Heart right ventricle (tissue), 16 donors: ENCODE measurements at regions of chr2 and their contacts with region 1.

Region 1: GRCh38 chr2:67329513-67329912 is 67.6 kb upstream of the ETAA1 start:
- DNase-seq: no peak
- ATAC-seq: no peak
- H3K4me3 ChIP-seq: no peak overlapping the region
- H3K27ac ChIP-seq: no peak overlapping the region
- H3K4me1 ChIP-seq: no peaks in the 10 kb centered on the region
- H3K27me3 ChIP-seq: peaks cover 0 to 25% (median 4%) of the 10 kb centered on the region in 7 donors
- CTCF ChIP-seq: no peak

Region 2: DNA sequence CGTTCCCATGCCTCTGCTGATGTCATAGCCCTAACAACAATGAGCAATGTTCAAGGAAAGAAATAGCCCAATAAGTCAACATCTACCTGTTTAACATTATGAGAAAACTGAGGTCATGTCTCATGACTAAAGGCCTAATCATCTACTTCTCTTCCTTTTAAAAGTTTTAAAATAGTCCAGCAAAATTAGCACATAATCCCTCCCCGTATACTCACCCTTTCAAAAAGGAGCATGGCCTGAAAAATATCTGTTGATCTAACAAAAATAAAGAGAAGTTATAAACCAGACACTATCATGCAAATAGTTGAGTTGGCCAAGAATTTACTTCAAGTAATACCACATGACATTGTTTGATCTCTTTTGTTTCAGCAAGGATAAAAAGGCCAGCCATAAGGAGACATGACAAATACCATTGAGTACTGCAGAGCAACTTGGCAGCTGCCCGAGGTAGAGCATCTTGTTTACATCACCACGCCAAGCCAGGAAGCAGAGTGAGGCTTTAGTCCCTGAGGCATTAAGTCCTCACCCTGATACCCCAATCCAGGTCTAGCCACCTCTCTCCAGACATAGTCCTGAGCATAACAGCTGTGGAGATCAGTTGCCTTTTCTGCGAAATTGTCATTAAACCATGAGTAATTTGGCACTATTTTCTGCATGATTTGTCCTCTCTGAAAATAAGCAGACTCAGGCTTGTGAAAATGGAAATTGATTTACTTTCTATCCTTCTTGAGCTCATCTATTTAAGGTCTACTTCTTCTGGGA is 69.8 kb before region 1 on chr2:
- intact Hi-C with region 1: no loop called
- DNase-seq: peak; percentile 15 to 29
- ATAC-seq: peak in 7 of 8 donors; percentile 48 to 80 (median 64)
- H3K4me3 ChIP-seq: no peak overlapping the region
- H3K27ac ChIP-seq: peak overlapping the region; percentile 18 to 76 (median 60)
- H3K4me1 ChIP-seq: peaks cover 0 to 12% (median 0%) of the 10 kb centered on the region in 9 donors
- H3K27me3 ChIP-seq: no peaks in the 10 kb centered on the region
- CTCF ChIP-seq: no peak

Region 3: GRCh38 chr2:67295851-67296250 is 33.7 kb before region 1 on chr2:
- intact Hi-C with region 1: loop called in 1 of 10 experiments (anchors 1 kb)
- DNase-seq: no peak
- ATAC-seq: no peak
- H3K4me3 ChIP-seq: no peak overlapping the region
- H3K27ac ChIP-seq: no peak overlapping the region
- H3K4me1 ChIP-seq: no peaks in the 10 kb centered on the region
- H3K27me3 ChIP-seq: peaks cover 0 to 7% (median 0%) of the 10 kb centered on the region in 7 donors
- CTCF ChIP-seq: no peak